Heart left ventricle (tissue), 16 donors: ENCODE measurements at regions of chr16 and their contacts with region 1.

Region 1: DNA sequence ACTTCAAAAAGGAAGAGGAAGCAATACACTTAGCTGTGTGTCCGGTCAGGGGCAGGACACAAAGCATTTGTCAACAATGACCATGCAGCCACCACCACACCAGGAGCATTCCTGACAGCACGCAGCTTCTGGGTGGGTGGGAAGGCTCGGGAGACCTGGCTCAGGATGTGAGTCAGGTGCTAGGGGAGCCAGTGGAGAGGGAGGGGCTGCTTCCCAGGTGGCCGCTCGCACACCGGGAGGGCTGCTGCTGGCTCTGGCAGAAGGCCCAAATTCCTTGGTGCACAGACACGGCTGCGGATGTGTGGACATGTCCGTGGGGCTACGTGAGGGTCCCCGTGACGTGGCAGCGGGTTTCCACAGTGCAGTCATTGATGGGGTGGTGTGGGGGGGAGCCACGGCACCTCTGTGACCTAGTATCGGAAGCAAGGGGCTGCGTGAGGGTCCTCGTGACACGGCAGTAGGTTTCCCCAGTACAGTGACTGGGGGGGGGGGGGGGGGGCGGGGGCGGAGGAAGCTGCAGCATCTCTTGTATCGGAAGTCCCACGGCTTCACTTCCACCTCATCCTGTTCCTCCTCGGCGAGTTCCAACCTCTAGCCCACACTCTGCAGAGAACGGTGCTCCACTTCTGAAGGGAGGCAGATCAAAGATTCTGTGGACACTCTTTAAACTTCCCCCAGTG is 112.8 kb downstream of the ZNF778 start:
- DNase-seq: peak in 3 of 5 donors; percentile 49 to 63 (median 57)
- ATAC-seq: peak in 3 of 4 donors; percentile 13 to 47 (median 15)
- H3K4me3 ChIP-seq: peak overlapping the region in 4 of 12 donors; percentile 7 to 24 (median 20)
- H3K27ac ChIP-seq: peak overlapping the region in 11 of 12 donors; percentile 11 to 62 (median 58)
- H3K4me1 ChIP-seq: peaks cover 20 to 87% (median 66%) of the 10 kb centered on the region in 12 donors
- H3K27me3 ChIP-seq: no peaks in the 10 kb centered on the region
- CTCF ChIP-seq: no peak
- POLR2A ChIP-seq: no peak

Region 2: GRCh38 chr16:89383082-89384003 is 53.0 kb after region 1 on chr16:
- intact Hi-C with region 1: loop called in 2 of 10 experiments (anchors 5 to 10 kb)
- DNase-seq: peak in 4 of 5 donors; percentile 52 to 66 (median 58)
- ATAC-seq: peak; percentile 52 to 85 (median 79)
- H3K4me3 ChIP-seq: no peak overlapping the region
- H3K27ac ChIP-seq: peak overlapping the region in 4 of 12 donors; percentile 11 to 40 (median 26)
- H3K4me1 ChIP-seq: peaks cover 7 to 85% (median 56%) of the 10 kb centered on the region in 12 donors
- H3K27me3 ChIP-seq: no peaks in the 10 kb centered on the region
- CTCF ChIP-seq: no peak
- POLR2A ChIP-seq: no peak

Region 3: GRCh38 chr16:89507834-89508590 is 177.7 kb after region 1 on chr16 and contains the start of gene SPG7:
- intact Hi-C with region 1: loop called (anchors 2 to 10 kb)
- DNase-seq: peak; percentile 88 to 95 (median 89)
- ATAC-seq: peak; percentile 74 to 94 (median 88)
- H3K4me3 ChIP-seq: peak within 1 kb of the TSS; percentile 57 to 98 (median 95)
- H3K27ac ChIP-seq: peak within 1 kb of the TSS; percentile 89 to 100 (median 97)
- H3K4me1 ChIP-seq: peaks cover 4 to 49% (median 37%) of the 10 kb centered on the region in 12 donors
- H3K27me3 ChIP-seq: no peaks in the 10 kb centered on the region
- CTCF ChIP-seq: peak in 2 of 12 donors; percentile 4 to 8
- POLR2A ChIP-seq: peak; percentile 43 to 97
- total RNA-seq, gene SPG7: 84.0 to 168 (median 95.9) TPM

Region 4: DNA sequence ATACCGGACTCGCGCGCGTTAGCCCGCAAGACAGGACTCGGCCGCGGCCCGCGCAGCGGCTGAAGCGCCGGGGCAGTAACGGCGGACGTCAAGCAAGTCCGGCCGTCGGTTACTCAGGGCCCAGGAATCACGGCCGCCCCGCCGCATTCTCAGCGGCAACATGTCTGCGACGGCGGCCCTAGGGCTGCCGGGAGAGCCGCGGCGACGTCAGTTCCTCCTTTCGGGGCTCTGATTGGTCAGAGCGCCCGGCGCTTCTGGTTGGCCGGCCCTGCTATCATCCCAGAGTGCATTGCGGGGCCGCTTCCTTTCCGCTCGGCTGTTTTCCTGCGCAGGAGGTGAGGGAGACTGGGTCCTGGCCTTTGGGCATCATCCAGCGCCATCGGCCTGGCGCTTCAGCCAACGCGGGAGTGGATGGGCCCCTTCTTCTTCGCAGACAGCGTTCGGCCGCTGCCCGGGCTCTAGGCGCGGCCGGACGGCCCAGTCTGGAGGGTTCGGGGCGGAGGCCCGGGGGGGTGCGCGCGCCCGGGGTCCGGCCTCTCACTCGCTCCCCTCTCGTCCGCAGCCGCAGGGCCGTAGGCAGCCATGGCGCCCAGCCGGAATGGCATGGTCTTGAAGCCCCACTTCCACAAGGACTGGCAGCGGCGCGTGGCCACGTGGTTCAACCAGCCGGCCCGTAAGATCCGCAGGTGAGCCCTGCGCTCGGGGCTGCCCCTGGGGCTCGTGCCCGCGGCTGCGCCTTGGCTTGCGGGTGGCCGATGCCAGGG is 230.2 kb after region 1 on chr16 and contains the start of gene RPL13:
- intact Hi-C with region 1: loop called in 7 of 10 experiments (anchors 2 to 5 kb)
- DNase-seq: peak; percentile 95 to 97 (median 96)
- ATAC-seq: peak; percentile 94 to 97 (median 96)
- H3K4me3 ChIP-seq: peak within 1 kb of the TSS; percentile 33 to 97 (median 84)
- H3K27ac ChIP-seq: peak within 1 kb of the TSS; percentile 88 to 99 (median 95)
- H3K4me1 ChIP-seq: peaks cover 8 to 64% (median 30%) of the 10 kb centered on the region in 12 donors
- H3K27me3 ChIP-seq: no peaks in the 10 kb centered on the region
- CTCF ChIP-seq: peak in 1 of 12 donors; percentile 6
- POLR2A ChIP-seq: peak; percentile 68 to 97
- total RNA-seq, gene RPL13: 701 to 3,315 (median 1,152) TPM

Region 5: DNA sequence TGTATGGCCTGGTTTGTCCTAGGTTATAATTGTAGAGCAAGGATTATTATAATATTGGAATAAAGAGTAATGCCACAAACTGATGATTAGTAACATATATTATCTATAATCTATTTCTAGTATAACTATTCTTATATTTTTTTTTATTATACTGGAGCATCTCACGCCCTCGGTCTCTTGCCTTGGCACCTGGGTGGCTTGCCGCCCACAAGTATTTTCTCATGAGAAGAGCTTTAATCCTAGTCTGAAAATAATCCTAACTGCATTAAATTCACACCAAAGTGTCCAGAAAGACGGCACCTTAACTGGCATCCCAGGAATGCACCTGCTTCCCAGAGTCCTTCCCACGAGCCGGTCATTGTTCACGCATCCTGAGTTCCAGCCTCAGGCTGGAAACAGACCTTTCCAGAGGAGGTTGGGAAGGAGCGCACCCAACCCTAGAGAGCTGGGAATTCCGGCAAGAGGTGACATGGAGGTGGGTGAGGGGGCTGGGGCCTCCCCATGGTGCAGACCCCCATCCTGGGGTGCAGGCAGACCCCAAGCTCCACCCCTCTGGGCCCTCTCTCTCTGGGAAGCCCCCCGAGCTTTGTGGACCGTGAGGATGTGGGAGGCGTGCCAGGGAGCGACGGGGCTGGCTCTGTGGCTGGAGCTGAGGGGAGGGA is 311.3 kb after region 1 on chr16:
- intact Hi-C with region 1: loop called in 3 of 10 experiments (anchors 5 to 10 kb)
- DNase-seq: peak in 1 of 5 donors; percentile 62
- ATAC-seq: no peak
- H3K4me3 ChIP-seq: peak overlapping the region in 7 of 12 donors; percentile 40 to 62 (median 48)
- H3K27ac ChIP-seq: no peak overlapping the region
- H3K4me1 ChIP-seq: peaks cover 0 to 17% (median 7%) of the 10 kb centered on the region in 12 donors
- H3K27me3 ChIP-seq: no peaks in the 10 kb centered on the region
- CTCF ChIP-seq: peak in 1 of 12 donors; percentile 2
- POLR2A ChIP-seq: no peak